ENCODE measurements at regions of chr4 and their contacts with region 1.

Region 1: DNA sequence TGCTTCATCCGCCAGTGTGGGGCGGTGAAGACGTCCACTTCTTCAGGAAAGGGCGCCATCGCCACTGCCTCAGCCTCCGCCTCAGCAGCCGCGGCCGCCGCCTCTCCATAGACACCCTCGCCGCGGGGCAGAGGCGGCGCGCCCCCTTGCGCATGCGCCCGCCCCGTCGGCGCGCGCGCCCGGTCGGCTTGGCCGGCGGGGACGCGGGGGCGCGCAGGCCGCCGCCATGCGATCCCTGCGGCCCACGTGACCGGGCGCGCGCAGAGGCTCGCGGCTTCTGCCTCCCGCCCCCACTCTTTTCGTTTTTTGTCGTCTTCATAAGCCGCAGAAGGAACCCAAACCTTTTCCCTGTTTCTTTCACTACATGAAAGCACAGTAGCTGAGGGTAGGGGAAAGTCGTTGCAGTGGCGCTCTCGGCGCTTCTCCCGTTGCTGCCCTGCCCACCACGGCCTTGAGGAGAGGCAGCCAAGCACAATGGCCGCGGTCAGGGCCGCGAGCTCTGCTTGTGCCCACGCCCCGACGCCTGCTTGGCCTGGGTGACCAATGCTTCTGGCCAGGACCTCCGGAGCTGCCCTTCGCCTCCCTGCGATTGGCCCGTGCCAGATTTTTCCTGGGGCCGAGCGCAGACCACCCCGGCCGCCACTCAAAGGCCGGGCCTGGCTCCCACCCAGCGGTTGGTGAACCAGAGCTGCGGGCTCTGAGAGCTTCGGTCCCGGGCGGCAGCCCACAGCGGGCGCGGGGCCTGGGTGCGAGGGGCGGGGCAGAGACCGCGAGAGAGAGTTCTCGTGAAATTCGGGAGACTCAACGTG is at the start of gene FBXL5:
- DNase-seq: peak; percentile 79
- H3K4me3 Mint-ChIP-seq: peak within 1 kb of the TSS; percentile 99
- H3K27ac Mint-ChIP-seq: peak within 1 kb of the TSS; percentile 96
- H3K4me1 Mint-ChIP-seq: peaks cover 68% of the 10 kb centered on the region
- H3K27me3 Mint-ChIP-seq: no peaks in the 10 kb centered on the region
- total RNA-seq, gene FBXL5: 30.8 to 31.0 TPM

Region 2: DNA sequence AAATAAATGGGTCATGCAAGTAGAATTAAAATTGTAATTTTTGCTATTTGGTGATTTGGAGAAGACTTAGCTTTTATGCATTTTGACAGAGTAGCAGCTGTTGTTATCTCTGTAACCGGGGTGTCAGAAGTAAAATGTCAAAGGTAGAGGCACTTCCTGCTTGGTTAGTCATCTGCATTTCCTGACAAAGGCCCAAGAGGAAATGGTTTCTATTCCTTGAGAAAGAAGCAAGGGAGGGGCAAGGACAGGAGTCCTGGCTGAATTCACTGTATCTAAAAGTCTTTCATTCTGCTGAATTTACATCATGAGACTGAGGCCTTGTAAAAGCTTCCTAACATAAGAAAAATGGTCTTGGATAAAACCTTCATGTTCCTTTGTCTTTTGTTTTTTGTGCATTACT is 1477.0 kb before region 1 on chr4:
- CTCF ChIA-PET with region 1: no interaction called
- intact Hi-C with region 1: loop called (anchors 10 kb)
- DNase-seq: peak; percentile 7
- H3K4me3 Mint-ChIP-seq: no peak overlapping the region
- H3K27ac Mint-ChIP-seq: peak overlapping the region; percentile 75
- H3K4me1 Mint-ChIP-seq: peaks cover 20% of the 10 kb centered on the region
- H3K27me3 Mint-ChIP-seq: no peaks in the 10 kb centered on the region

Region 3: GRCh38 chr4:15681207-15682015 is 26.0 kb after region 1 on chr4 and contains the start of gene FAM200B:
- CTCF ChIA-PET with region 1: interaction called, 4 read pairs
- intact Hi-C with region 1: loop called (anchors 1 kb)
- DNase-seq: peak; percentile 99
- H3K4me3 Mint-ChIP-seq: peak within 1 kb of the TSS; percentile 90
- H3K27ac Mint-ChIP-seq: peak within 1 kb of the TSS; percentile 89
- H3K4me1 Mint-ChIP-seq: peaks cover 39% of the 10 kb centered on the region
- H3K27me3 Mint-ChIP-seq: peaks cover 3% of the 10 kb centered on the region
- total RNA-seq, gene FAM200B: 8.0 to 9.1 TPM

Region 4: GRCh38 chr4:15756361-15756861 is 101.0 kb after region 1 on chr4:
- CTCF ChIA-PET with region 1: interaction called, 6 read pairs
- intact Hi-C with region 1: loop called (anchors 1 kb)
- DNase-seq: peak; percentile 89
- H3K4me3 Mint-ChIP-seq: peak overlapping the region; percentile 54
- H3K27ac Mint-ChIP-seq: peak overlapping the region; percentile 83
- H3K4me1 Mint-ChIP-seq: peaks cover 44% of the 10 kb centered on the region
- H3K27me3 Mint-ChIP-seq: no peaks in the 10 kb centered on the region

Region 5: DNA sequence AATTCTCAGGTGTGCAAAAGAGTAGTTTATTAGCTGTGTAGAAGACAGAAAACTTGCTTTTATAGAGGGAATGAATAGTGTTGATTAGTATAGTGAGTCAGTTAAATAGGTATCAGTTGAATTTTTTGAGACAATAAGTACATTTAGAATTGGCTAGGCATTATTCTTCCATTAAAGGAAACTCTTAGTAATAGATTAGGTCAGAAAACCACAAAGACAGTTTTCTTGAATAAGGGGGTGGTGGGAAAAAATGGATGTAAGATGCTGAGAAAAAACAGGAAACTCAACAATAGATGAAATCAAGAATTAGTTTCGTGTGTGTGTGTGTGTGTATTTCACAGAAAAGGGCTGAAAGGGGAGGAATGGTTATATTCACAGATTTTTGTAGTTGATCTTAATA is 139.5 kb after region 1 on chr4:
- CTCF ChIA-PET with region 1: no interaction called
- intact Hi-C with region 1: loop called (anchors 1 kb)
- DNase-seq: no peak
- H3K4me3 Mint-ChIP-seq: peak overlapping the region; percentile 39
- H3K27ac Mint-ChIP-seq: peak overlapping the region; percentile 47
- H3K4me1 Mint-ChIP-seq: peaks cover 53% of the 10 kb centered on the region
- H3K27me3 Mint-ChIP-seq: no peaks in the 10 kb centered on the region

Measured in activated naive CD4-positive, alpha-beta T cell treated with anti-CD3 and anti-CD28 coated beads for 36 hours (primary cell).